PC-9 (cell line): ENCODE measurements at regions of chr5 and their contacts with region 1.

Region 1: DNA sequence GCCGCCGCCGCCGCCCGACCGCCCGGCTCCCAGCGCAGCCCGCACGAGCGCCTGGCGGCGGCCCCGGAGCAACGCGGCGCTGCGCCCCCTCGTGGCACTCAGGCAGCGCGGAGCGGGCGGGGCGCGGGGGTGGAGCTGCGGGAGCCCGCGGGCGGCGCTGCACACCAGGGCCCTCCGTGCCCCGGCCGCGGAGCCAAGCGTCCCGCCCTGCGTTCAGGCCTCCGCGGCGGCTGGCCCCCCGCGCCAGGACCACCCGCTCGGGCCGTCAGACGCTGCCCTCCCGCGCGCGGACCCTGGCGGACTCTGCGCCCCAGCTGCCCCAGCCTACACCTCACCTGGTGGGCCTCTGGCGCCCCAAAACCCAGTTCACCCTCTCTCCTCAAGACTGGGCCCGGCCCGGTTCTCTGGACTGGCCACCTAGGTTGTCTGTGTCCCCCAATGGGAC is at the start of gene RASGEF1C:
- DNase-seq: peak in 1 of 2 experiments; percentile 72
- H3K4me3 ChIP-seq: peak within 1 kb of the TSS; percentile 39; the same call in 1 of the 2 replicates
- H3K27ac ChIP-seq: no peak within 1 kb of the TSS
- H3K4me1 ChIP-seq: no peaks in the 10 kb centered on the region
- H3K27me3 ChIP-seq: no peaks in the 10 kb centered on the region; the same call in 1 of the 2 replicates
- CTCF ChIP-seq: peak; percentile 36; the same call in 1 of the 2 replicates
- total RNA-seq, gene RASGEF1C: not detected in 2 replicates

Region 2: GRCh38 chr5:180117000-180117725 is 92.0 kb before region 1 on chr5:
- CTCF ChIA-PET with region 1: no interaction called
- POLR2A ChIA-PET with region 1: interaction called, 3 read pairs
- intact Hi-C with region 1: loop called (anchors 5 kb)
- DNase-seq: peak; percentile 40 to 76
- H3K4me3 ChIP-seq: no peak overlapping the region
- H3K27ac ChIP-seq: no peak overlapping the region
- H3K4me1 ChIP-seq: no peaks in the 10 kb centered on the region
- H3K27me3 ChIP-seq: no peaks in the 10 kb centered on the region
- CTCF ChIP-seq: peak; percentile 80

Region 3: DNA sequence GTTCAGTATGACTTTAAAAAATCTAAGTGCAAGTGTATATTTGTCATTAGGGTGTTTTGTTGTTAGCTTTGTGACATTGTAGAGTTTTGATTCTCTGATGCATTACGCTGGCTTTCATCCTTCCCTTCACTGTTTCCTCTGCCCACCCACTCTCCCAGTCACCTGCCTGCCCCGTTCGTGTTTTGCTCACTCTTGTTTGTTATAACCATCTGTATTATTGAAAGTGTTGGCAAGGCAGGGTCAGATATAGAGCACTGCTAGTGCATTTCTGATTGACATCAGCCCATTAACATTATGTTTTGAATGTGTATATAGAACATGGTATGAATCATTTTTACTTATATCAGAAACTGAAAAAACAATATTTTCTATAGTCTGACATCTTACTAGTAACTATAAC is 354.8 kb after region 1 on chr5:
- CTCF ChIA-PET with region 1: interaction called, 12 read pairs
- POLR2A ChIA-PET with region 1: no interaction called
- intact Hi-C with region 1: no loop called
- DNase-seq: no peak
- H3K4me3 ChIP-seq: no peak overlapping the region
- H3K27ac ChIP-seq: no peak overlapping the region
- H3K4me1 ChIP-seq: no peaks in the 10 kb centered on the region
- H3K27me3 ChIP-seq: no peaks in the 10 kb centered on the region
- CTCF ChIP-seq: no peak

Region 4: GRCh38 chr5:180605554-180606214 is 396.5 kb after region 1 on chr5:
- CTCF ChIA-PET with region 1: no interaction called
- POLR2A ChIA-PET with region 1: no interaction called
- intact Hi-C with region 1: loop called (anchors 10 kb)
- DNase-seq: peak; percentile 53 to 64
- H3K4me3 ChIP-seq: no peak overlapping the region
- H3K27ac ChIP-seq: no peak overlapping the region
- H3K4me1 ChIP-seq: no peaks in the 10 kb centered on the region
- H3K27me3 ChIP-seq: peaks cover 50% of the 10 kb centered on the region
- CTCF ChIP-seq: peak; percentile 91